IMR-90 (cell line): ENCODE measurements at regions of chr9 and their contacts with region 1.

Region 1: DNA sequence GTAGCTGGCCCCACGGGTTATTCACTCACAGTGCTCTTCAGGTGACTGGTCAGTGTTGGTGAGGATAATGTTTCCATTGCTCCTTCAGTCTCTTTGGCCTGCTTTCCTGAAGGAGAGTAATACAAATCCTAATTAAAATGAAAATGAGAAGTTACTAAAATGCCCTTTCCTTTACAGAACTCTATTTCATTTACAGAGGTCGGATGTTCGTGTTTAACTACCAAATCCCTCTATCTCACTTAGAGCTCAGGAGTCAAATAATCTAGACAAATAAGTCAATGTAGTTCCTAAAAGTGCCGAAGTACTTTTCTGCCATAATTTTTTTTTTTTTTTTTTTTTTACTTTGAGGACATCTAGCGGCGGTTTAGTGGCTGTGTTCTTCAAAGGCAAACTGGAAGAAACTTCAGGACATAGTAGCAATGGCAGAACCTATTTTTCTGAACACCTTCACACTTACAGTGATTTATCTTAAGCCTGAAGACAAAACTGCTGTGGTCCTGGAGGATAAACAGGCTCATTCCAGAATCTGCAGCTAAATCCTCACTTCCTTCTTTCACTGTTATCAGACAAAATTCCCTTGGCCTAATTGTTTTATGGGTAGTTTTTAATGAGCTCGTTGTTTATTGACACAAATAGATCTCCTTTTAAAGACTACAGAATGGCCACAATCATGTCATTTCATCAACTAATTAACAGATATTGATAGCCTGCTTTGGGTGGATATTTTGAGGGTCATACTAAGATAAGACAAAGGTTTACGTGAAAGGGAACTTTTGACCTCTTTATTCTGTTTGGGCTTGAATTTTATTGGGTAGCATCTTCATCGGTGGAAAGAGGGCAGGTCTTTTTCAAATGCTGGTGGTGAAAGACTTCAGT is 207.6 kb upstream of the DMRTA1 start:
- DNase-seq: peak; percentile 63
- ATAC-seq: peak; percentile 40
- H3K4me3 ChIP-seq: no peak overlapping the region
- H3K27ac ChIP-seq: peak overlapping the region; percentile 7; the same call in 1 of the 2 replicates
- H3K4me1 ChIP-seq: peaks cover 8% of the 10 kb centered on the region
- H3K27me3 ChIP-seq: no peaks in the 10 kb centered on the region
- CTCF ChIP-seq: peak; percentile 62
- POLR2A ChIP-seq: no peak
- RAD21 ChIP-seq: peak; percentile 51

Region 2: DNA sequence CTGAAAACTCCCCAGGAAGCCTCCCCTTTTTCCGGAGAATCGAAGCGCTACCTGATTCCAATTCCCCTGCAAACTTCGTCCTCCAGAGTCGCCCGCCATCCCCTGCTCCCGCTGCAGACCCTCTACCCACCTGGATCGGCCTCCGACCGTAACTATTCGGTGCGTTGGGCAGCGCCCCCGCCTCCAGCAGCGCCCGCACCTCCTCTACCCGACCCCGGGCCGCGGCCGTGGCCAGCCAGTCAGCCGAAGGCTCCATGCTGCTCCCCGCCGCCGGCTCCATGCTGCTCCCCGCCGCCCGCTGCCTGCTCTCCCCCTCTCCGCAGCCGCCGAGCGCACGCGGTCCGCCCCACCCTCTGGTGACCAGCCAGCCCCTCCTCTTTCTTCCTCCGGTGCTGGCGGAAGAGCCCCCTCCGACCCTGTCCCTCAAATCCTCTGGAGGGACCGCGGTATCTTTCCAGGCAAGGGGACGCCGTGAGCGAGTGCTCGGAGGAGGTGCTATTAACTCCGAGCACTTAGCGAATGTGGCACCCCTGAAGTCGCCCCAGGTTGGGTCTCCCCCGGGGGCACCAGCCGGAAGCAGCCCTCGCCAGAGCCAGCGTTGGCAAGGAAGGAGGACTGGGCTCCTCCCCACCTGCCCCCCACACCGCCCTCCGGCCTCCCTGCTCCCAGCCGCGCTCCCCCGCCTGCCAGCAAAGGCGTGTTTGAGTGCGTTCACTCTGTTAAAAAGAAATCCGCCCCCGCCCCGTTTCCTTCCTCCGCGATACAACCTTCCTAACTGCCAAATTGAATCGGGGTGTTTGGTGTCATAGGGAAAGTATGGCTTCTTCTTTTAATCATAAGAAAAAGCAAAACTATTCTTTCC is 264.3 kb before region 1 on chr9:
- CTCF ChIA-PET with region 1: no interaction called
- POLR2A ChIA-PET with region 1: no interaction called
- dilution Hi-C with region 1: no loop called
- in situ Hi-C with region 1: no loop called
- intact Hi-C with region 1: loop called (anchors 1 kb)
- DNase-seq: peak; percentile 57
- ATAC-seq: peak; percentile 87
- H3K4me3 ChIP-seq: peak overlapping the region; percentile 75
- H3K27ac ChIP-seq: peak overlapping the region; percentile 45
- H3K4me1 ChIP-seq: no peaks in the 10 kb centered on the region
- H3K27me3 ChIP-seq: peaks cover 55% of the 10 kb centered on the region
- CTCF ChIP-seq: no peak
- POLR2A ChIP-seq: no peak
- RAD21 ChIP-seq: no peak

Region 3: DNA sequence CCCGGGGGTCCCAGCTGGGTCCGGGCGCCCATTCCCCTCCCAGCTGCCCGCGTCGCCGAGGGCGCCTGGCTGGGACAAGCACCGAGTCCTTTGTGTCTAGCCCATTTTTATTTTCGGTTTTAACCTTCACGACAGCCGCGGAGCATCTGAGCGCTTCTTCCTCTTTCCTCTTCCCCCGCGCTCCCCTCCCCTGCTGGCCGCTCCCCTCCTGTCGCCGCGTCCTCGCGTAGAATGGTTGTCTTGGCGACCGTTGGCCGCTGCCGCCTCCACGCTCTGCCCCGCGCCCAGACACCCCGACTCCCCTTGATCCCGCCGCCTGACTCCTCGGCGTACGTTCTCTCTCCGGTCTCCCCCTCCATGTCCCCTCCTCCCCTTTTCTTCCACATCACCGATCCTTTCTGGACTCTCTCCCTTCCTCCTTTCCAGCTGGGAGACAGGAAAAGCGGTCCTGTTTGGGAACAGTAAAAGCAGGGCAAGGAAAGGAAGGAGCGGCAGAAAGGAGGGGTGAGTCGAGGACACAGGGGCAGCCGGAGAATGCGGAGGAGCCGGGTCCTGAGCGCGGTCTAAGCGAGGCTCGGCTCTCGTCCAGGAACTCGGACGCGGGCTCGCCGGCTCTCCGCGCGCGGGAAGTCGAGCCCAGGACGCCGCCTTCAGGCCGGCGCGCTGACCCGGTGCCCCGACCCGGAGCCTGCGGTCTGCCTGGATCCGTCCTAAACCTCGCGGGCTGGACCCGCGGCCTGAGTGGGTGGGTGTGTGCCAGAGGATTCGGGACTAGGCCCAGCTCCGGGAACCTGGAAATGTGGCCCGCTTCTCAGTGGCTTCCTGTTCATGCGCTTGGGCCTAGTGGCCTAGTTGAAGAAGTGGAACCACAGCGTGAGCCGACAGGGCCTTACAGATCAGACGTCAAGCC is 243.6 kb before region 1 on chr9:
- CTCF ChIA-PET with region 1: interaction called, 10 read pairs
- POLR2A ChIA-PET with region 1: no interaction called
- dilution Hi-C with region 1: no loop called
- in situ Hi-C with region 1: loop called (anchors 10 kb)
- intact Hi-C with region 1: loop called (anchors 2 kb)
- DNase-seq: peak; percentile 69
- ATAC-seq: peak; percentile 71
- H3K4me3 ChIP-seq: peak overlapping the region; percentile 77
- H3K27ac ChIP-seq: peak overlapping the region; percentile 90
- H3K4me1 ChIP-seq: peaks cover 7% of the 10 kb centered on the region
- H3K27me3 ChIP-seq: no peaks in the 10 kb centered on the region
- CTCF ChIP-seq: 0 out of 2 replicates have a peak, but pooled peaks have one; percentile 19
- POLR2A ChIP-seq: no peak; the same call in none of the 2 replicates
- RAD21 ChIP-seq: no peak

Region 4: DNA sequence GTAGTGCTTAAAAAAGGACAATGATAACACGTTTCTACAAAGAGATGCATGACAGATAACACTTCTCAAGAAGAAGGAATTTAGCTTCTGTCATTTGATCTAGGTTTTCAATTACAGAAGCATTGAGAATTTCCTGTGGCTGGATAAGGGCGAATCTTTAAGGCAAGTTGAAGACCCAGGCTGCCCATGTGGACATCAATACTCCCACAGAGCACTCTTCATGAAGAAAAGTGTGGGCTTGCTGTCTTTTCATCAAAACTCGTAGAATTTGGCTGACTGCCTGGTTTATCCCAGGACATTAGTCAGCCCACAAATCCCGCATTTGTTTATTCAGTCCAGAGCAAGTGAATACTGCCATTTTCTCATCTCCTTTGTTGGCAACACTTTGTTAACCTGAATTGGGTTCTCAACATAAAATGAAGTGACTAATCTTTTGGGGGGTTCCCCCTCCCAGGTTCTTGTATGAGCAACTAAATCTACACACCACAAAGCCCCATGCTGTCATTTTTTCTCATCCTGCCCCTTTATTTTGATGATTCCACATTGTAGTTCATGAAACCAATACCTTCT is 186.6 kb before region 1 on chr9:
- CTCF ChIA-PET with region 1: interaction called, 11 read pairs
- POLR2A ChIA-PET with region 1: no interaction called
- dilution Hi-C with region 1: no loop called
- in situ Hi-C with region 1: no loop called
- intact Hi-C with region 1: loop called (anchors 5 kb)
- DNase-seq: peak; percentile 99
- ATAC-seq: peak; percentile 76
- H3K4me3 ChIP-seq: no peak overlapping the region
- H3K27ac ChIP-seq: no peak overlapping the region
- H3K4me1 ChIP-seq: peaks cover 2% of the 10 kb centered on the region
- H3K27me3 ChIP-seq: no peaks in the 10 kb centered on the region
- CTCF ChIP-seq: no peak
- POLR2A ChIP-seq: no peak
- RAD21 ChIP-seq: no peak

Region 5: DNA sequence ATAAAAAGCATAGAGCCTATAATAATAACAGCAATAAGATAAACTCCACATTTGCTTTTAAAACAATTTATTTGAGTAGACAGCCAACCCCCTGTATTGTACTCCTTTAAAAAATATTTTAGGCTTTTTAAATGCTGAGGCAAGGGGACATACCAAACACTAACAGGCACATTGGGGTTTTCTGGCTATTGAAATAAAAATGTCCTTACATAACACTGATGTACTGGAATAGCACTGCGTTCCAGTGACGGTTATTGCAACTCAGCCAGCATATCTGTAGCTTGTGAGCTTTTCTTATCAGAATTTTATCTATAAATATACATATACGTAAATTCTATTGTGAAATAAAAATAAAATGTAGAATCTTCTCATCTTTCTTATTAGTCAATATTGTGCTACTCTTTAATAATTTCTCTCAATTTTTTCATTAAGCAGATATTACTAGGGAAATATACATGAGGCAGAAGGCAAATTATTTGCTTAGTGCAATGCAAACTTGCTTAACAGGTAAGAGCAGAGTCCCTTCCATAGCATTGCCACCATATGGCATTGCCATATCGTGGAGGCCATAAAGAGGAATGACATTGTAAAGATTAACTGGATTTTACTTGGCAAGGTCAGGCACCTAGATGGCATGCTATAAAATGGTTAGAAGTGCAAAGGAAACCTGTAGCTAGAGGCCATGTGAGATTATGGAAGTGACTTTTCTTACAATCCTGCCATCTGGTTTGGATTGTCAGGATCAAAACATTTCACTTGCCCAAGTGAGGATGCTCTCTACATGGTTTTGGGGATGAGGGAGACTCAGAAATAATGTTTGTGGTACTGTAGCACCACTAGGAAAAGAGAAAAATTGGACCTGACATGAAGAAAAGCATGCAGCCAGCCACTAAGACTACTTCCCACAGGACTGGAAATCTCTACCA is 135.1 kb before region 1 on chr9:
- CTCF ChIA-PET with region 1: interaction called, 5 read pairs
- POLR2A ChIA-PET with region 1: no interaction called
- dilution Hi-C with region 1: no loop called
- in situ Hi-C with region 1: no loop called
- intact Hi-C with region 1: loop called (anchors 1 kb)
- DNase-seq: peak; percentile 75
- ATAC-seq: peak; percentile 45
- H3K4me3 ChIP-seq: no peak overlapping the region
- H3K27ac ChIP-seq: peak overlapping the region; percentile 72; the same call in 1 of the 2 replicates
- H3K4me1 ChIP-seq: peaks cover 21% of the 10 kb centered on the region
- H3K27me3 ChIP-seq: no peaks in the 10 kb centered on the region
- CTCF ChIP-seq: no peak
- POLR2A ChIP-seq: no peak
- RAD21 ChIP-seq: no peak

Region 6: GRCh38 chr9:22119537-22120158 is 119.4 kb before region 1 on chr9:
- CTCF ChIA-PET with region 1: interaction called, 5 read pairs
- POLR2A ChIA-PET with region 1: no interaction called
- dilution Hi-C with region 1: no loop called
- in situ Hi-C with region 1: no loop called
- intact Hi-C with region 1: loop called (anchors 5 kb)
- DNase-seq: peak; percentile 50
- ATAC-seq: peak; percentile 30; the same call in 1 of the 2 replicates
- H3K4me3 ChIP-seq: no peak overlapping the region
- H3K27ac ChIP-seq: no peak overlapping the region
- H3K4me1 ChIP-seq: peaks cover 16% of the 10 kb centered on the region
- H3K27me3 ChIP-seq: no peaks in the 10 kb centered on the region
- CTCF ChIP-seq: peak; percentile 64
- POLR2A ChIP-seq: no peak
- RAD21 ChIP-seq: peak; percentile 75

Region 7: DNA sequence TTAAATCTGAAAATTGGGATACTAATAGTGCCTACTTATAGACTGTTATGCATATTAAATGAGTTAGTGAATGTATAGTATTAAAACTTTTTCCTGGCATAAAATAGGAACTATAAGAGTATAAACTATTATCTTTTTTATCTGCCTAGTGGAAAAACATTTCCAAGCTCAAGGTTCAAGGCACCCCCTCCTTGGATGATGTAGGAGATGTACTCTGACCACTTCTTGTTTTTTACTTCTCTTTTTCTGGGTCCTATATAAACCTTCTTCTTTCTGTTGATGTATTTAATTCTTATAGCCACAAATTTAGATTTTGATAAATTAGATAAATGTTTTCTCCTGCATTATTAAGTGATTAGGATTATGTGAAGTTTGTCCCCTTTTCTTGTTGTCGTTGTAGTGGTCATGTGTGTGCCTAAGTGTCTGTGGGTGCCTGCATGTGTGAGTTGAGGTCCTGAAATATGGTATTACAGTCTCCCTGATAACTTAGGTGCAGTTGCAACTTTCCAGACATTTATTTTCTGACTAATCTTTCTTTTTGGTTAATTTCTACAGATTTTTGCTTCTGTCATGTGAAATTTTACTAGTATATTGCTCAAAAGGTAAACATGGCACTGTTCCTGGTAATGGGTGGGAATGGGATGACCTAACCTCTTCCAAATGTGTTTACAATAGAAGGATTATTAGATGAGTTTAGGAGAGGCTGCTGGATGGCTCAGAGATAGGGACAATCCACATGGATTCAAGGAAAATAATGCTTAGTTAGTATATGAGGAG is 69.1 kb before region 1 on chr9:
- CTCF ChIA-PET with region 1: no interaction called
- POLR2A ChIA-PET with region 1: no interaction called
- dilution Hi-C with region 1: no loop called
- in situ Hi-C with region 1: no loop called
- intact Hi-C with region 1: loop called (anchors 2 kb)
- DNase-seq: peak; percentile 89
- ATAC-seq: peak; percentile 85
- H3K4me3 ChIP-seq: no peak overlapping the region
- H3K27ac ChIP-seq: 0 out of 2 replicates have a peak overlapping the region, but pooled peaks have one; percentile 57
- H3K4me1 ChIP-seq: peaks cover 9% of the 10 kb centered on the region
- H3K27me3 ChIP-seq: no peaks in the 10 kb centered on the region
- CTCF ChIP-seq: no peak
- POLR2A ChIP-seq: no peak
- RAD21 ChIP-seq: no peak

Region 8: DNA sequence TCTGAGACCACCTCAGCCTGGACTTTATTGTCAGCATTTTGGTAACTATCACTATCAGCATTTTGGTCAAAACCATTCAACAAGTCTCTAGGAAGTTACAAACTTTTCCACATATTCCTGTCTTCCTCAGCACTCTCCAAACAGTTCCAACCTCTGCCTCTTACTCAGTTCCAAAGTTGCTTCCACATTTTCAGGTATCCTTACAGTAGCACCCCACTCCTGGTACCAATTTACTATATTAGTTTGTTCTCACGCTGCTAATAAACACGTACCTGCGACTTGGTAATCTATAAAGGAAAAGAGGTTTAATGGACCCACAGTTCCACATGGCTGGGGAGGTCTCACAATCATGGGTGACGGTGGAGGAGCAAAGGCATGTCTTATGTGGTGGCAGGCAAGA is 758.9 kb after region 1 on chr9:
- CTCF ChIA-PET with region 1: no interaction called
- POLR2A ChIA-PET with region 1: no interaction called
- dilution Hi-C with region 1: no loop called
- in situ Hi-C with region 1: no loop called
- intact Hi-C with region 1: no loop called
- DNase-seq: no peak
- ATAC-seq: no peak
- H3K4me3 ChIP-seq: no peak overlapping the region
- H3K27ac ChIP-seq: no peak overlapping the region
- H3K4me1 ChIP-seq: no peaks in the 10 kb centered on the region
- H3K27me3 ChIP-seq: no peaks in the 10 kb centered on the region
- CTCF ChIP-seq: no peak
- POLR2A ChIP-seq: no peak
- RAD21 ChIP-seq: no peak